Vagina (tissue), 2 donors: ENCODE measurements at regions of chrX and their contacts with region 1.

Region 1: DNA sequence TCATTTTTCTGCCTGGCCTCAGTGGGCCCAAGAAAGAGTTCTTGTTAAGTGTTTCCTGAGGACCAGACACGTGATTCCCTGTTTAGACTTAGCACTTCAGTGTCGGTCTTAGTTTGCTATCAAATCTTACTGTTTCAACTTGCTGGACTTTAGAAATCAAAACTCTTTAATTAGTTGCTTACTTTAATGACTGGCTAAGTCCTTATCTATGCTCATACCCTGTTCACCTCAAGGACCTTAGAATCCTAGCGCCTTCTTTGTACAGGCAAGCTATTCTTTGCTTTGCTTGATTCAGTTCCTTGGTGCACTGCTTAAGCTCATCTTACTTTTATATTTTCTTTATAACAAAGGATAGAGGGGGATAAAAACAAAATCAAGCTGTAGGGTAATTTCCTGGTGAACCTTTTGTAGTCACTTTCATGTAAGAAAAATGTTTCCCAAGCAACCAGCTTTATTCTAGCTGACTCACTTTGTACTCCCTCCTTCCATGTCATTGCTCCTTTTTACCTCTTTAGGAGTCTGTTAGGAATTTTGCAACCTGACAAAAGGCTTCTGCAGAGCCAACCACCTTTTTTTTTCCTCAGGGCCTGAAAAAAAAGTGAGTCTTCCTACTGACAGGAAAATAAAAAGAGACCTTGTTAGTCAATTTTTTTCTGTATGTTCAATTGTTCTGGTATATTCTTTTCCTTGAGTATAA is 14.7 kb downstream of the WDR44 start:
- DNase-seq: no peak
- H3K4me3 ChIP-seq: no peak overlapping the region
- H3K27ac ChIP-seq: no peak overlapping the region
- H3K4me1 ChIP-seq: peaks cover 8% of the 10 kb centered on the region
- H3K27me3 ChIP-seq: no peaks in the 10 kb centered on the region
- CTCF ChIP-seq: no peak
- POLR2A ChIP-seq: no peak

Region 2: GRCh38 chrX:118212817-118213183 is 147.8 kb before region 1 on chrX:
- intact Hi-C with region 1: no loop called
- DNase-seq: no peak
- H3K4me3 ChIP-seq: no peak overlapping the region
- H3K27ac ChIP-seq: no peak overlapping the region
- H3K4me1 ChIP-seq: no peaks in the 10 kb centered on the region
- H3K27me3 ChIP-seq: no peaks in the 10 kb centered on the region
- CTCF ChIP-seq: no peak
- POLR2A ChIP-seq: no peak

Region 3: GRCh38 chrX:118588715-118589114 is 228.1 kb after region 1 on chrX:
- intact Hi-C with region 1: loop called (anchors 5 kb)
- DNase-seq: no peak
- H3K4me3 ChIP-seq: no peak overlapping the region
- H3K27ac ChIP-seq: no peak overlapping the region
- H3K4me1 ChIP-seq: no peaks in the 10 kb centered on the region
- H3K27me3 ChIP-seq: no peaks in the 10 kb centered on the region
- CTCF ChIP-seq: no peak
- POLR2A ChIP-seq: no peak

Region 4: GRCh38 chrX:118847676-118848075 is 487.1 kb after region 1 on chrX:
- intact Hi-C with region 1: no loop called
- DNase-seq: no peak
- H3K4me3 ChIP-seq: no peak overlapping the region
- H3K27ac ChIP-seq: no peak overlapping the region
- H3K4me1 ChIP-seq: no peaks in the 10 kb centered on the region
- H3K27me3 ChIP-seq: no peaks in the 10 kb centered on the region
- CTCF ChIP-seq: peak; percentile 25 to 57 (median 48)
- POLR2A ChIP-seq: no peak